Heart right ventricle (tissue), 16 donors: ENCODE measurements at regions of chr9 and their contacts with region 1.

Region 1: GRCh38 chr9:2857564-2858198 is 13.8 kb upstream of the PUM3 start:
- DNase-seq: peak; percentile 12 to 55
- ATAC-seq: peak in 6 of 8 donors; percentile 53 to 74 (median 66)
- H3K4me3 ChIP-seq: no peak overlapping the region
- H3K27ac ChIP-seq: no peak overlapping the region
- H3K4me1 ChIP-seq: no peaks in the 10 kb centered on the region
- H3K27me3 ChIP-seq: peaks cover 0 to 18% (median 4%) of the 10 kb centered on the region in 7 donors
- CTCF ChIP-seq: peak; percentile 57 to 87 (median 79)

Region 2: GRCh38 chr9:2336055-2336454 is 521.6 kb before region 1 on chr9:
- intact Hi-C with region 1: no loop called
- DNase-seq: no peak
- ATAC-seq: no peak
- H3K4me3 ChIP-seq: no peak overlapping the region
- H3K27ac ChIP-seq: no peak overlapping the region
- H3K4me1 ChIP-seq: peaks cover 0 to 26% (median 7%) of the 10 kb centered on the region in 9 donors
- H3K27me3 ChIP-seq: no peaks in the 10 kb centered on the region
- CTCF ChIP-seq: peak in 6 of 9 donors; percentile 8 to 45 (median 30)

Region 3: DNA sequence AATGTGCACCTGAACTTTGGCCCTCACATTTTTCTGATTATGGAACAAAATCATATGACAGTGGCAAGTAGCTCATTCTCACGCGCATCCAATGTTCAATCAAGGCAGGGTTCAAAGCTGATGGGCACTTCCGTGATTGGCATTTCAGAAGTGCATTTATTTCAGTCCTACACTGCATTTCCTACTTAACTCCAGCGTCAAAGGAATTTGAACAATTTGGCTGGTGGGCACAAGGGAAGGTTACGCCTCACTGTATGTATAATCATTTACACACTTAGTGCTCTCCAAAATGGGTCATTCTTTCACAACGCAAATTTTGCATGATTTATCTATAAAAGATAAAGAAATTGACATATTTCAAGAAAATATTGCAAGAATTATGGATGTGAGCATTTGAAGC is 404.0 kb before region 1 on chr9:
- intact Hi-C with region 1: no loop called
- DNase-seq: no peak
- ATAC-seq: no peak
- H3K4me3 ChIP-seq: no peak overlapping the region
- H3K27ac ChIP-seq: no peak overlapping the region
- H3K4me1 ChIP-seq: peaks cover 0 to under 1% (median 0%) of the 10 kb centered on the region in 9 donors
- H3K27me3 ChIP-seq: no peaks in the 10 kb centered on the region
- CTCF ChIP-seq: no peak

Region 4: GRCh38 chr9:3181049-3181953 is 323.6 kb after region 1 on chr9:
- intact Hi-C with region 1: loop called in 4 of 10 experiments (anchors 5 to 10 kb)
- DNase-seq: peak in 1 of 2 donors; percentile 21
- ATAC-seq: peak in 5 of 8 donors; percentile 11 to 64 (median 50)
- H3K4me3 ChIP-seq: peak overlapping the region in 7 of 10 donors; percentile 4 to 41 (median 20)
- H3K27ac ChIP-seq: no peak overlapping the region
- H3K4me1 ChIP-seq: peaks cover 0 to 14% (median 10%) of the 10 kb centered on the region in 9 donors
- H3K27me3 ChIP-seq: peaks cover 0 to 68% (median 58%) of the 10 kb centered on the region in 7 donors
- CTCF ChIP-seq: peak in 7 of 9 donors; percentile 20 to 37 (median 27)

Region 5: GRCh38 chr9:4366591-4367330 is 1509.1 kb after region 1 on chr9:
- intact Hi-C with region 1: loop called in 5 of 10 experiments (anchors 5 to 10 kb)
- DNase-seq: no peak
- ATAC-seq: peak in 2 of 8 donors; percentile 31 to 42
- H3K4me3 ChIP-seq: no peak overlapping the region
- H3K27ac ChIP-seq: no peak overlapping the region
- H3K4me1 ChIP-seq: no peaks in the 10 kb centered on the region
- H3K27me3 ChIP-seq: no peaks in the 10 kb centered on the region
- CTCF ChIP-seq: peak; percentile 14 to 75 (median 57)

Region 6: DNA sequence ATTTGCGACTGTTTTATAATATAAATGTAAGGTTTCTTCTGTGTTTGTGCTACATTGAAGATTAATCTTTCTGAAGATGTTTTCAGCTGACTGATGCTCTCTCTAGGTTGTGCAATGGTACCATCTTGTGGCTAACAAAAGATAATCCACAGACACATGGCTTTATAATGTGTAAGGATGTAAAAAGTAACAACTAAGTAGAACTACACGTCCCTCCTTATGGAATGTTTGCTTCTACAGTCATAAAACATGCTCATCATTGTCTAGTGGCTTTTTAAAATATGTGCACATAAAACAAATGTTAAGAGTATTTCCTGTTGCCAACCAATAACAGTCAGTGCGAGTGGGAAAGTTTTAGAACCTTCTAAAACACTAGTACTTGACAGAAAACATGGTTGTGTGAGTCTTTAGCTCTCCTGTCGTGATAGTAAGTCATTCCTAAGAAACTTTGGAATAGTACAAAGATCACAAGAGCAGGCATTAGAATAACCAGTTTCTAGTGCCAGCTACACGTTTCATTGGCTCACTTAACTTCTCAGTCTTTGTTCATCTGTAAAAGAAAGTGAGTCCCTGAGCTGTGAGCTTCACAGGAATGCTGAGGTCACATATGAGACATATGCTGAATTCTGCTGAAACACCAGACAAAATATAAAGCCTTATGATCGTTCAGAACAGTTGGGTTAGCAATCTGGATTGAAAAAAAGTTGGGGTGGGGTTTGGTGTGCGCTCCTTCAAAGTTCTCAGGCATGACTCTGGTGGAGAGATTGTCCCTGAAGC is 1517.9 kb after region 1 on chr9:
- intact Hi-C with region 1: loop called in 4 of 10 experiments (anchors 5 to 10 kb)
- DNase-seq: no peak
- ATAC-seq: peak in 2 of 8 donors; percentile 66 to 67
- H3K4me3 ChIP-seq: no peak overlapping the region
- H3K27ac ChIP-seq: no peak overlapping the region
- H3K4me1 ChIP-seq: no peaks in the 10 kb centered on the region
- H3K27me3 ChIP-seq: peaks cover 0 to 29% (median 0%) of the 10 kb centered on the region in 7 donors
- CTCF ChIP-seq: peak in 8 of 9 donors; percentile 17 to 65 (median 53)